Activated CD4-positive, alpha-beta T cell treated with anti-CD3 and anti-CD28 coated beads for 36 hours (primary cell): ENCODE measurements at regions of chr16 and their contacts with region 1.

Region 1: DNA sequence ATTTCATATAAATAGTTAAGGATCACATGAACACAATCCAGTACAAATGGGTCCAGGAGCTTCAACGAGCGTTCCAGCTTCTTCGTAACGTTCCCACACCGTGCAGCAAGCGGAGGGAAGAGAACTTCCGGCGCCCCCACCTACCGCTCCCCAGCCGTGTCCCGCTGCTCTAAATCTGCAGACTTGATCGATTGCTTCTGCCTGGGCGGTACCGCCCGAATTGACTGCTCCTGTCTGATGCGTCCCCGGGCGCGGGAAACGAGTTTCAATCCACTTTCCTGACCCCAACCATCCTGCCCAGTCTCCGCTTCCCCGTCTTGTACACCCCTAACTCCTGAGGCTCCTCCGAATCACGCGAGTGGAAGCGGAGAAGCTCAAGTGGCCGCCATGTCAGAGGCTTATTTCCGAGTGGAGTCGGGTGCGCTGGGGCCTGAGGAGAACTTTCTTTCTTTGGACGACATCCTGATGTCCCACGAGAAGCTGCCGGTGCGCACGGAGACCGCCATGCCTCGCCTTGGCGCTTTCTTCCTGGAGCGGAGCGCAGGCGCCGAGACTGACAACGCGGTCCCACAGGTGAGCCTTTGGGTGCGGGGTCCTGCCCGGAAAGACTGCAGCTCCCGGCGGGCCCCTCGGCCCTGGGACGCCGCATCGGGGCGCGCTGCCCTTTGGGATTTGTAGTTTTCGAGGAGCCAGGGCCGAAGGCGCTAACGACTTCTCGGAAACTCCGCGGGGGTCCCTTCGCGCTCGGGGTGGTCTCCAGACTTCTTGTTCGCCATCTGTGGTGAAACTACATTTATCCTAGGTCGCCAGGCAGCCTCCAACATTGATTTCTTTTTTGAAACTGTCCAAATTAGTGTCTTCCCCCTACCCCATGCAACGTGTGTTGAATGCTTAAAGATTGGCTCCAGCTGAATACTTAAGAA is at the start of gene GINS3:
- DNase-seq: peak; percentile 93
- ATAC-seq: peak; percentile 96
- H3K4me3 Mint-ChIP-seq: peak within 1 kb of the TSS; percentile 100
- H3K27ac Mint-ChIP-seq: peak within 1 kb of the TSS; percentile 100
- H3K4me1 Mint-ChIP-seq: peaks cover 12% of the 10 kb centered on the region
- H3K27me3 Mint-ChIP-seq: no peaks in the 10 kb centered on the region
- total RNA-seq, gene GINS3: 20.2 to 23.0 TPM

Region 2: DNA sequence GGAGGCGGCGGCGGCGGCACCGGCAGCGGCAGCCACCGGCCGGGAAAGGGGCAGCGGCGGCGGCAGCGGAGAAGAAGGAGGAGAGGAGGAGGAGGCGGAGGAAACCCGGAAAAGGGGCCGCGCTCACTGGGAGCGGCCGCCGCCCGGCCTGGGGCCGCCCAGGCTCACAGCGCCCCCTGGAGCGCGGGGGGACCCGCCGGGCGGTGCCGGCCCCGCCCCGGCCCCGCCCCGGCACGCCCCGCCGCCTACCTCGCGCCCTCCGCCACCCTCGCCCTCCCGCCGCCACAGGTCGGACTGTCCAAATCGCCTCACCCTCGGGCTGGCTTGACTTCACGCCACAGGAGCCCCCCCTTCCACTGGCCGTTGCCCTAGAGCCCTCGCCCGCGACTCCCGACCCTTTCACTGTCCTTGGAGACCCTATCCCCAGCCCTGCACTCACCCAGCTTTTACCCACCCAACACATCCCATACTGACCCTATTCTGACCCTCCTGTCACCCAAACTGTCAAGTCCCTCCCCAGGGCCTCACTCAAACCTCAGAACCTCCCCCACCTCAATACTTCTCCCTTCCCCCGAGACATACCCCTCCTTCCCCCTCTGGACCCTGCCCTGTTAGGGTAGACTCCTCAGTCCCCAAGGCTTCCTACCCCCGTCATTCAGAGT is 194.3 kb before region 1 on chr16 and contains the start of gene CSNK2A2:
- CTCF ChIA-PET with region 1: interaction called, 3 read pairs
- POLR2A ChIA-PET with region 1: no interaction called
- intact Hi-C with region 1: loop called in 1 of 2 experiments (anchors 1 kb)
- DNase-seq: peak; percentile 84
- ATAC-seq: peak; percentile 94
- H3K4me3 Mint-ChIP-seq: peak within 1 kb of the TSS; percentile 84
- H3K27ac Mint-ChIP-seq: peak within 1 kb of the TSS; percentile 74
- H3K4me1 Mint-ChIP-seq: peaks cover 34% of the 10 kb centered on the region
- H3K27me3 Mint-ChIP-seq: peaks cover 6% of the 10 kb centered on the region
- total RNA-seq, gene CSNK2A2: 85.9 to 92.2 TPM

Region 3: DNA sequence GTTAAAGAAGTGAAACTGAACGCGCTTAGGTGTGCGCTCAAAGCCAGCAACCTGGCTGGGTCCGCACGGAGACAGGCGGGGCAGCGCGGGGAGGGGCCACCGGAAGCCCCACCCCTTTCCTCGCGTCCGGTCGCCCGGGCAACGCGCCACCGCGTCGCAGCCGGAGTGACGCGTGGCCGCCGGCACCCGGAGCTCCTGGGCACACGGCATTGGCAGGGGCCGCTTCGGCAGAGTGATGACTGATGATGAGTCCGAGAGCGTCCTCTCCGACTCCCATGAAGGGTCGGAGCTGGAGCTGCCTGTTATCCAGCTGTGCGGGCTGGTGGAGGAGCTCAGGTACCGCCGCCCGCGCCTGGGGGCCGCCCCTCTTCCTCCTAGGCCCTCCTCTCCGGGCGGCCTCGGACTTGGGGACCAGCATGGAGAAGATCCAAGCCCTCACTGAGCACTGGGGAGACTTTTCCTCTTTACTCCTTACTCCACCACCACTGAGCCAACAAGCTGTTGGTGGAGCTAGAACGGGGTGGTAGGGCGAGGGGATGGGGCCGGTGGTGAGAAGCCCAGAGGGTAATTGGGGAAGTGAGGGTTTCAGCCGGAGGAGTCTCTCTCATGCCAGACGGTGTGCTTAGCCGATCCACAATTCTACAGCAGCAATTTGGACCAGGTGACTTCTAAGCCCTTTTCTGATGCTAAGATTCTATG is 142.5 kb before region 1 on chr16:
- CTCF ChIA-PET with region 1: interaction called, 4 read pairs
- POLR2A ChIA-PET with region 1: no interaction called
- intact Hi-C with region 1: loop called in 1 of 2 experiments (anchors 1 kb)
- DNase-seq: peak; percentile 92
- ATAC-seq: peak; percentile 98
- H3K4me3 Mint-ChIP-seq: peak overlapping the region; percentile 81
- H3K27ac Mint-ChIP-seq: peak overlapping the region; percentile 85
- H3K4me1 Mint-ChIP-seq: peaks cover 8% of the 10 kb centered on the region
- H3K27me3 Mint-ChIP-seq: no peaks in the 10 kb centered on the region

Region 4: GRCh38 chr16:58459344-58460218 is 67.1 kb after region 1 on chr16:
- CTCF ChIA-PET with region 1: interaction called, 3 read pairs
- POLR2A ChIA-PET with region 1: no interaction called
- intact Hi-C with region 1: loop called in 1 of 2 experiments (anchors 2 kb)
- DNase-seq: peak; percentile 82
- ATAC-seq: peak; percentile 93
- H3K4me3 Mint-ChIP-seq: no peak overlapping the region
- H3K27ac Mint-ChIP-seq: no peak overlapping the region
- H3K4me1 Mint-ChIP-seq: peaks cover 7% of the 10 kb centered on the region
- H3K27me3 Mint-ChIP-seq: peaks cover 29% of the 10 kb centered on the region

Region 5: GRCh38 chr16:58515125-58515870 is 122.8 kb after region 1 on chr16 and contains the start of gene SETD6:
- CTCF ChIA-PET with region 1: no interaction called
- POLR2A ChIA-PET with region 1: interaction called, 4 read pairs
- intact Hi-C with region 1: loop called in 1 of 2 experiments (anchors 1 kb)
- DNase-seq: peak; percentile 87
- ATAC-seq: peak; percentile 72
- H3K4me3 Mint-ChIP-seq: peak within 1 kb of the TSS; percentile 92
- H3K27ac Mint-ChIP-seq: peak within 1 kb of the TSS; percentile 86
- H3K4me1 Mint-ChIP-seq: peaks cover 49% of the 10 kb centered on the region
- H3K27me3 Mint-ChIP-seq: no peaks in the 10 kb centered on the region
- total RNA-seq, gene SETD6: 13.8 to 15.1 TPM

Region 6: GRCh38 chr16:58684354-58685083 is 292.0 kb after region 1 on chr16 and contains the start of gene SLC38A7:
- CTCF ChIA-PET with region 1: no interaction called
- POLR2A ChIA-PET with region 1: interaction called, 4 read pairs
- intact Hi-C with region 1: loop called in 1 of 2 experiments (anchors 1 kb)
- DNase-seq: peak; percentile 88
- ATAC-seq: peak; percentile 93
- H3K4me3 Mint-ChIP-seq: peak within 1 kb of the TSS; percentile 86
- H3K27ac Mint-ChIP-seq: peak within 1 kb of the TSS; percentile 74
- H3K4me1 Mint-ChIP-seq: peaks cover 19% of the 10 kb centered on the region
- H3K27me3 Mint-ChIP-seq: no peaks in the 10 kb centered on the region
- total RNA-seq, gene SLC38A7: 4.5 to 6.5 TPM